Activated T-helper 2 cell treated with anti-CD3 and anti-CD28 coated beads, Interferon-gamma antibody, Interleukin-2, Interleukin-4, amounts not matched to agents 10 μg/mL and 5 μg/mL and 100 μg/mL, durations not matched to agents 14 hours and 24 hours and 36 hours (primary cell): ENCODE measurements at regions of chr2 and their contacts with region 1.

Region 1: DNA sequence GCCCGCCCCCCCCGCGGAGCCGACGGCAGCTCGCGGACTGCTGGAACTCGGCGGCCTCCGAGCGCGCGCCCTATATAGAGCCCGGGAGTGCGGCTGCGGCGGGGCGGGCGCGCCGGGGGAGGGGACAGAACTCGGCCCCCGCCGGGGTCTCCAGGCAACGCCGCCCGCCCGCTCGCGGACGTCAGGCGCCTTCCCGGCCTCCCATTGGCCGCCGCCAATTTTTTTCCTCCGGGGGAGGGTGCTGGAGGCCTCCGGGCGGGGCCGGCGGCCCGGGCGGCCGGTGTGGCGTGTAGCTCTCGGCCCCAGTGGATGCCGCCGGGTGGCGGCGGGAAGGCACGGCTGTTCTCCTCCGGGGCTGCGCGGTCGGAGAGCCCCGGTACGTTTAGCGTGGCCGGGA is at the start of gene ZFP36L2:
- DNase-seq: peak; percentile 95
- H3K4me3 Mint-ChIP-seq: peak within 1 kb of the TSS; percentile 90
- H3K27ac Mint-ChIP-seq: peak within 1 kb of the TSS; percentile 95
- H3K4me1 Mint-ChIP-seq: peaks cover 30% of the 10 kb centered on the region
- H3K27me3 Mint-ChIP-seq: no peaks in the 10 kb centered on the region
- total RNA-seq, gene ZFP36L2: 114 TPM in 2 replicates

Region 2: DNA sequence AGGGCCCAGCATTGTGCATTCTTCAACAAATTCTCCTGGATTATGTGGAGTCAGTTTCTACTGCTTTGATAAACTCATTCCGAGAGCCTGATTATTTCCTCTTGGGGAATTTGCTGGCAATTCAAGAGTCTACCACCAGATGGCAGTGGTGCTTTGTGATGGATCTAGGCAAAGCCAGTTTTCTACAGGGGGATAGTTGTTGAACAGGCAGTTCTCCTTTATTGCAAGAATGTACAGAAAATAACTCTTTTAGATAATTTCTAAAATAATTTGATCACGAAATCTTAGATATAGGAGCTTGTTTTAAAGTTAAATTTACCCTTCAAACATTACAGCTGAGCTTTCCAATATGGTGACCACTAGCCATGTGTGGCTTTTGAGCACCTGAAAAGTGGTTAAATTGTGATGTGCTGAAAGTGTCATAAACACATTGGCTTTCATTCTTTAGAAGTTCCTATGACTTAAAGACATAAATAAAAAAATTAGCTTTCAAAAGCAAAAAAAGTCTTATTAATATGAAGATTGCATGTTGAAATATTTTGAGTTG is 367.5 kb before region 1 on chr2:
- intact Hi-C with region 1: loop called (anchors 1 kb)
- DNase-seq: peak; percentile 35
- H3K4me3 Mint-ChIP-seq: no peak overlapping the region
- H3K27ac Mint-ChIP-seq: no peak overlapping the region
- H3K4me1 Mint-ChIP-seq: peaks cover 2% of the 10 kb centered on the region
- H3K27me3 Mint-ChIP-seq: no peaks in the 10 kb centered on the region

Region 3: GRCh38 chr2:43059183-43059897 is 167.2 kb before region 1 on chr2:
- intact Hi-C with region 1: loop called (anchors 2 kb)
- DNase-seq: peak; percentile 39
- H3K4me3 Mint-ChIP-seq: peak overlapping the region; percentile 19
- H3K27ac Mint-ChIP-seq: peak overlapping the region; percentile 80
- H3K4me1 Mint-ChIP-seq: peaks cover 19% of the 10 kb centered on the region
- H3K27me3 Mint-ChIP-seq: peaks cover 2% of the 10 kb centered on the region

Region 4: GRCh38 chr2:43426305-43427031 is 199.9 kb after region 1 on chr2:
- intact Hi-C with region 1: loop called (anchors 5 kb)
- DNase-seq: peak; percentile 80
- H3K4me3 Mint-ChIP-seq: no peak overlapping the region
- H3K27ac Mint-ChIP-seq: peak overlapping the region; percentile 19
- H3K4me1 Mint-ChIP-seq: peaks cover 38% of the 10 kb centered on the region
- H3K27me3 Mint-ChIP-seq: no peaks in the 10 kb centered on the region

Region 5: DNA sequence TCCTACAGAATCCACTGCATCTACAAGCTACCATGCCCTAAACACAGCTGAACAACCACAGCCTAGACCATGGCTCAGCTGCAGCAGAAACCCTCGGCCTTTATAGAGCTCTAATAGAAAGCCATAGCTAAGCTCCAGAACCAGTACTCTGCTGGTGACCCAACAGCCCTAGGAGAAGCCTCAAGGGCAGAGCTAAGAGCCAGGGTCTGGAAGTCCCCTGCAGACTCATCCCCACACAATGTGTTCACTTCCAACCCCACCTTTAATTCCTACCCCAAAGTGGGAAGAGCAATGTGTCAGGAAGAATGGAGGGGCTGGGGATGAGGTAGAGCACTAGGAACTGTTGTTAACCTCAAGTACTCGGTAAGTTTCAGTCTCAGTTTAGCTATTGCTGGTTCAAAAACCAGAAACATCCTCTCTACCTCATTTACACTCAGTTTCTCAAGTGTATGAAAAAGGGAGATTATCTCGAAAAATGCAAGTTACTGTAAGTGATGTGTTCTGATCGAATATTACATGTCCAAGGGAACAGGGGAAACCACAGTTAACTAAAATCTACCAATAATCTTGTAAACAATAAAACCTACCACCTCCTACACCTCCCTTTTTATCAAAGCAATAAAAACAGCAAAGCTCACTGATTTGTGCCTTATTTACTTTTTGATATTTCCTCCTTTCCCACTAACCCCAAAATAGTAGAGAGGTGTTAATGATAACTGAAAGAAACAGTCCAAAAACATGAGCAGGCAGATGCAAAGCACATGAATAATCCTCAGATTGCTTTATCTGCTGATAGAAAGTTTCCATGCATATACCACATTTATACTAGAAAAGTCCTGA is 333.1 kb after region 1 on chr2:
- intact Hi-C with region 1: loop called (anchors 5 kb)
- DNase-seq: no peak
- H3K4me3 Mint-ChIP-seq: peak overlapping the region; percentile 20
- H3K27ac Mint-ChIP-seq: peak overlapping the region; percentile 89
- H3K4me1 Mint-ChIP-seq: peaks cover 53% of the 10 kb centered on the region
- H3K27me3 Mint-ChIP-seq: no peaks in the 10 kb centered on the region